Activated naive CD4-positive, alpha-beta T cell treated with anti-CD3 and anti-CD28 coated beads for 36 hours (primary cell): ENCODE measurements at regions of chr2 and their contacts with region 1.

Region 1: DNA sequence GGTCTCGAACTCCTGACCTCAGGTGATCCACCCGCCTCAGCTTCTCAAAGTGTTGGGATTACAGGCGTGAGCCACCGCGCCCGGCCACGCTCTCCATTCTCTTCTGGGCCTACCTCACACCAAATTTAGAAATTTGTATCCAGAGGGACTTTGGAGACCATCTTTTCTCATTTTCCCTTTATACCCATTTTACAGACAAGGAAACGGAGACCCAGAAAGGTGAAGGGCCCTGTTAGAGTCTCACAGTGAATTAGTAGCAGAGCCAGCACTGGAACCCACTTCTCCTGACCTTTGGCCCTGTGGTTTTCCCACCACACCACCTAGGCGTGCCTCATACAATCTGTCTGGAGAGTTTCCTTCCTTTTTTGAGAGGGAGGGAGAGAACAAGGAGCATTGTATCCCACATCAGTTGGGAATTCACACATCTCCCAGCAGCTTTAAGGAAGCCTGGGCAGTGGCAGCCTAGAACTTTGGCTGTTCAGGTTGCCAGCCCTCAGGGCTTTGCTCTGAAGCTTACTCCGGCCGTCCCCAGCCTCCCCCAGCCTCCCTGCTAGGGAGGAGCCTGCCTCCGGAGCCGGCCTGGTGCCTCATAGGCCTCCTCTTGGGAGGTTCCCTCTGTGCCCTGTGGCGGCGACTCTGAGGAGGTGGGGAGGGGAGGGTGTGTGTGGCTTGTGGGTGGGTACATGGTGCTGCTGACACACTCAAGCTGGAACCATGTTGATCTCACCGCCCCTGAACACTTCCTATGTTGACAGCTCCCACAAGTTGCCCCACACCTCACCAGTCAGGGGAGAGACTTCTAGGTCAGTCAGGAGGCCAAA is 13.8 kb downstream of the FOSL2 start:
- DNase-seq: peak; percentile 50
- H3K4me3 Mint-ChIP-seq: no peak overlapping the region
- H3K27ac Mint-ChIP-seq: peak overlapping the region; percentile 32
- H3K4me1 Mint-ChIP-seq: peaks cover 74% of the 10 kb centered on the region
- H3K27me3 Mint-ChIP-seq: no peaks in the 10 kb centered on the region

Region 2: DNA sequence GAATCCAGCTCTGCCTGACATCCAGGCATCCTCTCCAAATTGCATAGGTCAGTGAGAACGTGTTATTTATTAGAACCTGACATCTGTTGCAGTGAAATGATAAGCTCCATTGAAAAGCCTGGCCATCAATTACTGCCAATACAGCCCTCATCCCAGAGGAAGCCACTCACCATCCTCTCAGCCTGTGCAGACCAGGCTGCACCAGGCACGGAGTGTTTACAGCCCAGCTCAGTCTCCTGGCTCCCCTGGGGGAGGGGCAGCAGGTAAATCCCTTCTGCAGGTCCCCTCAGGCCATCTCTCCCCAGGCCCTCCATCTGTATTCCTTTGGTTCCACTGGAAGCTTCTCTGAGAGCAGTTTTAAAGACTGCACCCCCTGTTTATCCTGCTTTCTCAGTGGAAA is 96.4 kb before region 1 on chr2:
- CTCF ChIA-PET with region 1: no interaction called
- intact Hi-C with region 1: no loop called
- DNase-seq: no peak
- H3K4me3 Mint-ChIP-seq: no peak overlapping the region
- H3K27ac Mint-ChIP-seq: no peak overlapping the region
- H3K4me1 Mint-ChIP-seq: no peaks in the 10 kb centered on the region
- H3K27me3 Mint-ChIP-seq: no peaks in the 10 kb centered on the region

Region 3: GRCh38 chr2:28338046-28338817 is 68.3 kb before region 1 on chr2:
- CTCF ChIA-PET with region 1: no interaction called
- intact Hi-C with region 1: no loop called
- DNase-seq: no peak
- H3K4me3 Mint-ChIP-seq: no peak overlapping the region
- H3K27ac Mint-ChIP-seq: no peak overlapping the region
- H3K4me1 Mint-ChIP-seq: no peaks in the 10 kb centered on the region
- H3K27me3 Mint-ChIP-seq: no peaks in the 10 kb centered on the region

Region 4: DNA sequence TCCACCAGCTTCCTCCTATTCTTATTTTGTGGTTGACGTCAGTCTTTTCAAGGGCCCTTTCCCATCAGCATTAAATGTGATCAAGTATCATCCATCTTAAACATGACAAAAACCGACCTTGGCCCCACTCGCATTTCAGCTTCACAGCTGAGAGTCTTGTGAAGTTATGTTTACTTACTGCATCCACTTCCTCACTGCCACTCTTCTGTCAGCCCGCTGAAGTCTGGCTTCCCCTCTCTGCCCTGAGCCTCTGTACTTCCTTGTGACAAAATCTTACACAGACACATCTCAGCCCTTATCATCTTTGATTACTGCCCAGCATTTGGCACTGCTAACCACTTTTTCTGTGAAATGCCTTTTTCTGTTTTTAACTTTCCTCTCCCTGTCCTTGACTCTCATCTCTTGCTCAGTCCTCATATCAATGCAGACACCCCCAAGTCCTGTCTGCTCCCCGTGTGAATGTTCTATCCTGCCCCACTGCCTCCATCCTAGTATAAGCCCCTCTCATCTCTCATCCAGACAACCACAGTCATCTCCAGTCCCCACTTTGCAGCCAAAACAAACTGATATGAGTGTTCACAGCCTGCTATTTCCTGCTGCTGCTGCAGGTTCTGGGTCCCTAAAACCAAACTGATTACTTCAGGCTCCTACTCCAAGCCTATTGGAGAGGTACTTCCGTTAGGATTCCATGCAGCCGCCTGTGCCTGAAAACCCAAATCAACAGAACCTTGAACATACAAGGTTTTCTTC is 17.5 kb after region 1 on chr2:
- CTCF ChIA-PET with region 1: interaction called, 3 read pairs
- intact Hi-C with region 1: loop called (anchors 1 kb)
- DNase-seq: peak; percentile 65
- H3K4me3 Mint-ChIP-seq: peak overlapping the region; percentile 9
- H3K27ac Mint-ChIP-seq: peak overlapping the region; percentile 82
- H3K4me1 Mint-ChIP-seq: peaks cover 37% of the 10 kb centered on the region
- H3K27me3 Mint-ChIP-seq: no peaks in the 10 kb centered on the region